H1 (cell line): ENCODE measurements at regions of chr17 and their contacts with region 1.

Region 1: GRCh38 chr17:28951991-28952975 is 965 bp upstream of the PHF12 start:
- DNase-seq: peak; percentile 89 to 96
- H3K4me3 ChIP-seq: peak overlapping the region; percentile 68 to 97 (median 84)
- H3K27ac ChIP-seq: peak overlapping the region; percentile 92
- H3K4me1 ChIP-seq: peaks cover 9 to 28% (median 14%) of the 10 kb centered on the region in 4 experiments; a peak in 5 of 7 replicates
- H3K27me3 ChIP-seq: no peaks in the 10 kb centered on the region
- CTCF ChIP-seq: no peak
- EP300 ChIP-seq: no peak
- POLR2A ChIP-seq: peak; percentile 49 to 60; a peak in 2 of 3 replicates
- RAD21 ChIP-seq: no peak

Region 2: DNA sequence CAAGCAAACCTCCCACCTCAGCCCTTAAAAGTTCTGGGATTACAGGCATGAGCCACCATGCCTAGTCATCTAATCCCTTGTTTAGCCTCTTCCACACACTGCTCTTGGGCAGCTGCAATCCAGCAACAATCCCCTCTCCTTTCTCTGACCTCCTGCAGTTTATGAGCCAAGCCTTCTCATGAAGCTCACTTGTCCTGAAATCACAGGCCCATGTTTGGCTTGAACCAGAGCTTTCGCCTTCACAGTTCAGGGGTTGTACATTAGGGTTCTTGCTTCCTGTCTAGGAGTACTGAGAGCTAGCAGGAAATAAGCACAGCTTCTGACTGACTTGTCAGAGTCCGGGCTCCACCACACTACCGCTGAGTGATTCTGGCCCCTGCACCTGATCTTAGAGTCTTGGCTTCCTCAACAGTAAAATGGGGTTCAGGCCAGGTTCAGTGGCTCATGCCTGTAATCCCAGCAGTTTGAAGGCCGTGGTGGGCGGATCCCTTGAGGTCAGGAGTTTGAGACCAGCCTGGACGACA is 81.2 kb before region 1 on chr17:
- CTCF ChIA-PET with region 1: interaction called, 3 read pairs
- POLR2A ChIA-PET with region 1: interaction called, 10 read pairs
- DNase-seq: no peak
- H3K4me3 ChIP-seq: no peak overlapping the region
- H3K27ac ChIP-seq: no peak overlapping the region
- H3K4me1 ChIP-seq: no peaks in the 10 kb centered on the region
- H3K27me3 ChIP-seq: peaks cover 0 to 4% (median 0%) of the 10 kb centered on the region in 4 experiments; a peak in 2 of 7 replicates
- CTCF ChIP-seq: no peak
- EP300 ChIP-seq: no peak
- POLR2A ChIP-seq: no peak
- RAD21 ChIP-seq: no peak

Region 3: GRCh38 chr17:28902819-28903545 is 49.3 kb before region 1 on chr17 and contains the start of gene DHRS13:
- CTCF ChIA-PET with region 1: interaction called, 8 read pairs
- POLR2A ChIA-PET with region 1: interaction called, 22 read pairs
- DNase-seq: peak; percentile 87 to 97
- H3K4me3 ChIP-seq: peak within 1 kb of the TSS; percentile 52 to 85 (median 72)
- H3K27ac ChIP-seq: peak within 1 kb of the TSS; percentile 54
- H3K4me1 ChIP-seq: peaks cover 0 to 9% (median 5%) of the 10 kb centered on the region in 4 experiments; a peak in 5 of 7 replicates
- H3K27me3 ChIP-seq: no peaks in the 10 kb centered on the region
- CTCF ChIP-seq: peak; percentile 76 to 100 (median 99)
- EP300 ChIP-seq: peak in 1 of 2 experiments; percentile 65; a peak in 1 of 3 replicates
- POLR2A ChIP-seq: no peak
- RAD21 ChIP-seq: peak; percentile 23 to 64
- total RNA-seq, gene DHRS13: 22.1 and 23.7 TPM in 2 replicates

Region 4: GRCh38 chr17:28937044-28937729 is 15.1 kb before region 1 on chr17:
- CTCF ChIA-PET with region 1: interaction called, 9 read pairs
- POLR2A ChIA-PET with region 1: interaction called, 73 read pairs
- DNase-seq: no peak
- H3K4me3 ChIP-seq: no peak overlapping the region
- H3K27ac ChIP-seq: no peak overlapping the region
- H3K4me1 ChIP-seq: peaks cover 2 to 22% (median 16%) of the 10 kb centered on the region in 4 experiments; a peak in 5 of 7 replicates
- H3K27me3 ChIP-seq: no peaks in the 10 kb centered on the region
- CTCF ChIP-seq: no peak
- EP300 ChIP-seq: no peak
- POLR2A ChIP-seq: no peak
- RAD21 ChIP-seq: no peak